ENCODE measurements at regions of chr18 and their contacts with region 1.

Region 1: GRCh38 chr18:3771121-3771971 is 321.4 kb downstream of the TGIF1 start:
- DNase-seq: peak; percentile 96
- ATAC-seq: peak; percentile 99
- H3K4me3 ChIP-seq: peak overlapping the region; percentile 60
- H3K27ac ChIP-seq: peak overlapping the region; percentile 91
- H3K4me1 ChIP-seq: peaks cover 5% of the 10 kb centered on the region
- H3K27me3 ChIP-seq: no peaks in the 10 kb centered on the region
- CTCF ChIP-seq: peak; percentile 97
- POLR2A ChIP-seq: peak; percentile 31; the same call in 1 of the 2 replicates
- RAD21 ChIP-seq: peak; percentile 92

Region 2: DNA sequence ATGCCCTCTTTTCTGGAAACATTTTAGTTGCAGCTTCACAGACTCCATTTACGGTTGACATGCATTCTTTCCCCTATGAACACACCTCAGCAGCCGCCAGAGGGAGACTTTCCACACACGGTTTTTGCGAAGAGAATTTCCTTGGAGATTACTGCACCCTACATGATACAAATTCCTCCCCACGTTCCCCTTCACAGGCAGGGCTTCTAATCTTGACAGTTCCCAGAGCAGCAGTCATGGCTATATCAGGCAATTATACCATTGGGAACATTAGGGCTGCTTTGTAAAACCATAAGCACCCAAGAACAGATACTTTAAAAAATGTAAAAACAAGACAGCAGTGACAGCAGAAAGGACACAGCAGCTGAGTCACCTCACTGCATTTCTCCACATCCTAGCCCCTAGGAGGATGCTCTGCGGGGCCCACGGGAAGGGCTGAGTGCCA is 67.6 kb before region 1 on chr18:
- CTCF ChIA-PET with region 1: interaction called, 10 read pairs
- POLR2A ChIA-PET with region 1: no interaction called
- dilution Hi-C with region 1: no loop called
- in situ Hi-C with region 1: no loop called
- intact Hi-C with region 1: loop called (anchors 1 kb)
- DNase-seq: peak; percentile 73
- ATAC-seq: peak; percentile 92
- H3K4me3 ChIP-seq: no peak overlapping the region
- H3K27ac ChIP-seq: no peak overlapping the region
- H3K4me1 ChIP-seq: peaks cover 12% of the 10 kb centered on the region; the same call in 1 of the 2 replicates
- H3K27me3 ChIP-seq: no peaks in the 10 kb centered on the region; the same call in none of the 2 replicates
- CTCF ChIP-seq: peak; percentile 87
- POLR2A ChIP-seq: no peak
- RAD21 ChIP-seq: peak; percentile 78

Region 3: DNA sequence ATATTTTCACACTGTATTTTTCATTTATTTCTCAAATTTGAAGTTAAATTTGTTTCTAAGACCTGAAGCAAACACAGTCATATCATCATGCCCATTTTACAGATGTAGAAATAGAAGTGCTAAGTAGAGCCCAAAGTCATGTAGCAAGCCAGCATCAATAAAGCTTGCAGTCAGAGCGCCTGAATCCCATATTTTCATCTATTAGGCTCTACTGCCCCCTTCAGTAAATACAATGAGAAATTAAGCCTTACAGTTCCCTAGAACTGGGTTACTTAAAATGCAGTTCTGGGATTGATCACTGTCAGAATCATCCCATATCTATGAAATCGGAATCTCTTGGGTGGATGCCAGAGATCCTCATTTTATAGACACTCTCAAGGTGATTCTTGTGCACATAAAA is 98.5 kb after region 1 on chr18:
- CTCF ChIA-PET with region 1: interaction called, 33 read pairs
- POLR2A ChIA-PET with region 1: interaction called, 3 read pairs
- dilution Hi-C with region 1: no loop called
- in situ Hi-C with region 1: loop called (anchors 5 kb)
- intact Hi-C with region 1: loop called (anchors 1 kb)
- DNase-seq: peak; percentile 76
- ATAC-seq: peak; percentile 87
- H3K4me3 ChIP-seq: no peak overlapping the region
- H3K27ac ChIP-seq: no peak overlapping the region
- H3K4me1 ChIP-seq: no peaks in the 10 kb centered on the region
- H3K27me3 ChIP-seq: peaks cover 3% of the 10 kb centered on the region; the same call in 1 of the 2 replicates
- CTCF ChIP-seq: peak; percentile 71
- POLR2A ChIP-seq: no peak
- RAD21 ChIP-seq: peak; percentile 83

Region 4: GRCh38 chr18:3995476-3996102 is 224.2 kb after region 1 on chr18:
- CTCF ChIA-PET with region 1: interaction called, 39 read pairs
- POLR2A ChIA-PET with region 1: no interaction called
- dilution Hi-C with region 1: no loop called
- in situ Hi-C with region 1: no loop called
- intact Hi-C with region 1: loop called (anchors 1 kb)
- DNase-seq: peak; percentile 82
- ATAC-seq: peak; percentile 72
- H3K4me3 ChIP-seq: no peak overlapping the region
- H3K27ac ChIP-seq: no peak overlapping the region
- H3K4me1 ChIP-seq: no peaks in the 10 kb centered on the region
- H3K27me3 ChIP-seq: no peaks in the 10 kb centered on the region
- CTCF ChIP-seq: peak; percentile 80
- POLR2A ChIP-seq: no peak
- RAD21 ChIP-seq: peak; percentile 76